CD14-positive monocyte (primary cell): ENCODE measurements at regions of chr19 and their contacts with region 1.

Region 1: GRCh38 chr19:41310033-41310758 is at the start of gene CCDC97:
- DNase-seq: peak; percentile 84 to 87 (median 86)
- H3K4me3 ChIP-seq: peak within 1 kb of the TSS; percentile 84 to 85 (median 85)
- H3K4me3 Mint-ChIP-seq: peak within 1 kb of the TSS; percentile 95 to 99
- H3K27ac ChIP-seq: peak within 1 kb of the TSS; percentile 83 to 95
- H3K27ac Mint-ChIP-seq: peak within 1 kb of the TSS; percentile 97 to 100 (median 99)
- H3K4me1 ChIP-seq: peaks cover 50 to 64% of the 10 kb centered on the region in 2 donors
- H3K4me1 Mint-ChIP-seq: peaks cover 69% of the 10 kb centered on the region
- H3K27me3 ChIP-seq: no peaks in the 10 kb centered on the region
- H3K27me3 Mint-ChIP-seq: no peaks in the 10 kb centered on the region
- CTCF ChIP-seq: no peak
- polyA plus RNA-seq, gene CCDC97: 6.1 to 13.0 (median 8.8) TPM

Region 2: GRCh38 chr19:41123716-41124294 is 186.4 kb before region 1 on chr19:
- intact Hi-C with region 1: loop called in 1 of 2 experiments (anchors 2 kb)
- DNase-seq: no peak
- H3K4me3 ChIP-seq: no peak overlapping the region
- H3K4me3 Mint-ChIP-seq: no peak overlapping the region
- H3K27ac ChIP-seq: no peak overlapping the region
- H3K27ac Mint-ChIP-seq: peak overlapping the region in 2 of 7 donors; percentile 9 to 24
- H3K4me1 ChIP-seq: peaks cover 6 to 8% of the 10 kb centered on the region in 2 donors
- H3K4me1 Mint-ChIP-seq: peaks cover 24% of the 10 kb centered on the region
- H3K27me3 ChIP-seq: no peaks in the 10 kb centered on the region
- H3K27me3 Mint-ChIP-seq: peaks cover 16 to 23% (median 21%) of the 10 kb centered on the region in 3 donors
- CTCF ChIP-seq: no peak

Region 3: GRCh38 chr19:41206926-41207750 is 103.1 kb before region 1 on chr19:
- intact Hi-C with region 1: loop called (anchors 1 to 5 kb)
- DNase-seq: no peak
- H3K4me3 ChIP-seq: no peak overlapping the region
- H3K4me3 Mint-ChIP-seq: no peak overlapping the region
- H3K27ac ChIP-seq: no peak overlapping the region
- H3K27ac Mint-ChIP-seq: peak overlapping the region in 3 of 7 donors; percentile 13 to 21 (median 21)
- H3K4me1 ChIP-seq: no peaks in the 10 kb centered on the region
- H3K4me1 Mint-ChIP-seq: no peaks in the 10 kb centered on the region
- H3K27me3 ChIP-seq: no peaks in the 10 kb centered on the region
- H3K27me3 Mint-ChIP-seq: peaks cover 0 to 6% (median 1%) of the 10 kb centered on the region in 3 donors
- CTCF ChIP-seq: no peak

Region 4: GRCh38 chr19:41298348-41298964 is 11.7 kb before region 1 on chr19:
- intact Hi-C with region 1: no loop called
- DNase-seq: peak; percentile 38 to 50 (median 40)
- H3K4me3 ChIP-seq: no peak overlapping the region
- H3K4me3 Mint-ChIP-seq: no peak overlapping the region
- H3K27ac ChIP-seq: peak overlapping the region; percentile 34 to 77
- H3K27ac Mint-ChIP-seq: peak overlapping the region; percentile 81 to 96 (median 90)
- H3K4me1 ChIP-seq: peaks cover 12 to 24% of the 10 kb centered on the region in 2 donors
- H3K4me1 Mint-ChIP-seq: peaks cover 41% of the 10 kb centered on the region
- H3K27me3 ChIP-seq: no peaks in the 10 kb centered on the region
- H3K27me3 Mint-ChIP-seq: no peaks in the 10 kb centered on the region
- CTCF ChIP-seq: no peak

Region 5: DNA sequence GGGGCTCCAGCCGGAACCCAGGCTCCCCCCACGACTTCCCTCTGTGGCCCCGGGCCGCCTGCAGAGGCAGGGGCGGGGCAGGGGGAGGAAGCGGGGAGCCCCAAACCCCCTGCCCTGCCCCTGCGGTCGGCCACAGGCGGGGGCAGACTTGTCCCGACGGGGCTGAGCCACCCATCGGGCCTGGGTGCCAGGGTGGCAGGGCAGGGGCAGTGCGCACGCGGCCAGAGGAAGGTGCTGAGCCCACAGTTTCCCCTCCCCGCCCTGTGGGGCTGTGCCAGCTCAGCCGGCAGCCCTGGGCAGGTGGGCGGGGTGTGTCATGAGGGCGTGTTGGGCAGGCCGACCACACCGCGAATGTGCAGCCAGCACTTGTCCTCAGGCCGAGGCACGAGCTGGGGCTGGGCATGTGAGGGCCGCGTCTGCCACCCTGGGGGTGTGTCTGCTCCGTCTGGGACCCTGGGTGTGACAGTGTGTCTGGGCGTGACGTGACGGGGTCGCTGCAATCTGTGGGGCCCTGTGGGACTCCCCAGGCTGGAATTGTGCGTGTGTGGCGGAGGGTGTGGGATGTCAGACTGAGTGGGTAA is 17.5 kb after region 1 on chr19:
- intact Hi-C with region 1: loop called in 1 of 2 experiments (anchors 2 kb)
- DNase-seq: peak; percentile 91 to 96 (median 93)
- H3K4me3 ChIP-seq: peak overlapping the region; percentile 0 to 62 (median 38)
- H3K4me3 Mint-ChIP-seq: peak overlapping the region; percentile 84 to 93
- H3K27ac ChIP-seq: peak overlapping the region; percentile 90 to 96
- H3K27ac Mint-ChIP-seq: peak overlapping the region; percentile 95 to 99 (median 99)
- H3K4me1 ChIP-seq: peaks cover 93 to 100% of the 10 kb centered on the region in 2 donors
- H3K4me1 Mint-ChIP-seq: peaks cover 80% of the 10 kb centered on the region
- H3K27me3 ChIP-seq: no peaks in the 10 kb centered on the region
- H3K27me3 Mint-ChIP-seq: peaks cover 0 to 2% (median 0%) of the 10 kb centered on the region in 3 donors
- CTCF ChIP-seq: no peak